Heart left ventricle (tissue), 16 donors: ENCODE measurements at regions of chr10 and their contacts with region 1.

Region 1: GRCh38 chr10:11611248-11612020 is at the start of gene USP6NL:
- DNase-seq: peak; percentile 93 to 95 (median 93)
- ATAC-seq: peak; percentile 88 to 98 (median 98)
- H3K4me3 ChIP-seq: peak within 1 kb of the TSS; percentile 74 to 96 (median 90)
- H3K27ac ChIP-seq: peak within 1 kb of the TSS; percentile 84 to 92 (median 89)
- H3K4me1 ChIP-seq: peaks cover 0 to 30% (median 10%) of the 10 kb centered on the region in 12 donors
- H3K27me3 ChIP-seq: no peaks in the 10 kb centered on the region
- CTCF ChIP-seq: no peak
- POLR2A ChIP-seq: peak; percentile 5 to 81
- total RNA-seq, gene USP6NL: 5.7 to 12.2 (median 9.7) TPM

Region 2: DNA sequence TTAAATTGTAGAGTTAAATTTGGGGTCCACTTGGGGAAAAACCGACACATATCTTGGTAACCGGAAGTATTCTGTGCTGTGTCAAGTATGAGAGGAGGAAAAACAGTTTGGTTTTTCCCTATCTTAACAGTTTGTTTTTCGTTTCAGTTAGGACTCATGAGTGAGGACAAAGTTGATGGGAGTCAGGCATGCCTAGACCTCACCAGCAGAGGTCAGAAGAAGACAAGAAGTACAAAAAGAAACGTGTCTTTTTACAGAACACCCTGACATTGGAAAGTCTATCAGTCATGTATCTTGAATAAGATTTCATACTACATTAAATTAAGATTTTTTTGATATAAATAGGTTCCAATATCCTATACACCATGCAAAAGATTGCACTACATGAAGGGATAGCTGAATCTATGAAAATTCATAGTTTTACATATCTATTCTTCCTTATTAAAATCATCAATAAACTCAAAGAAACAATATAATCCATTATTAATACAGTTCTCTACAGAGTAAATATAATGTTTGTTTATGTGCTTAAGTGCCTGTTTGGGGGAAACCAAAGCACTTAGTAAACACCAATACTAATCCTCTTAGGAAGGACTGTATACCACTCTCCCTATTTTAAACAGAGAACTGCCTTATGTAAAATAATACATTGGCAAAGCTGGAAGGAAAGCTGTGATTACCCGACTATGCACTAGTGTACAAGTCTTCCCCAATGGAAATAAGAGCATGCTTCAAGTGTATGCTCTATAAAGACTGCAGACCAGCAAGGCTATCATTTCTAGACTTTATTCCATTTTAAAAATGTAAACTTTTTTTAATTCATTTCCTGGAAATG is 95.6 kb before region 1 on chr10:
- intact Hi-C with region 1: loop called in 5 of 10 experiments (anchors 5 to 10 kb)
- DNase-seq: peak in 4 of 5 donors; percentile 29 to 41 (median 36)
- ATAC-seq: peak in 3 of 4 donors; percentile 76 to 90 (median 86)
- H3K4me3 ChIP-seq: no peak overlapping the region
- H3K27ac ChIP-seq: no peak overlapping the region
- H3K4me1 ChIP-seq: peaks cover 0 to 15% (median 3%) of the 10 kb centered on the region in 12 donors
- H3K27me3 ChIP-seq: no peaks in the 10 kb centered on the region
- CTCF ChIP-seq: peak; percentile 67 to 95 (median 86)
- POLR2A ChIP-seq: no peak

Region 3: GRCh38 chr10:11525503-11525902 is 85.9 kb before region 1 on chr10:
- intact Hi-C with region 1: loop called in 5 of 10 experiments (anchors 5 to 10 kb)
- DNase-seq: peak; percentile 62 to 78 (median 70)
- ATAC-seq: peak; percentile 46 to 79 (median 77)
- H3K4me3 ChIP-seq: peak overlapping the region in 1 of 12 donors; percentile 6
- H3K27ac ChIP-seq: peak overlapping the region in 6 of 12 donors; percentile 19 to 64 (median 48)
- H3K4me1 ChIP-seq: peaks cover 0 to 50% (median 27%) of the 10 kb centered on the region in 12 donors
- H3K27me3 ChIP-seq: no peaks in the 10 kb centered on the region
- CTCF ChIP-seq: no peak
- POLR2A ChIP-seq: no peak

Region 4: GRCh38 chr10:11684717-11685645 is 73.5 kb after region 1 on chr10:
- intact Hi-C with region 1: loop called in 1 of 10 experiments (anchors 10 kb)
- DNase-seq: peak; percentile 64 to 81 (median 68)
- ATAC-seq: peak; percentile 68 to 87 (median 79)
- H3K4me3 ChIP-seq: peak overlapping the region in 9 of 12 donors; percentile 23 to 56 (median 36)
- H3K27ac ChIP-seq: peak overlapping the region in 11 of 12 donors; percentile 10 to 87 (median 66)
- H3K4me1 ChIP-seq: peaks cover 0 to 46% (median 18%) of the 10 kb centered on the region in 12 donors
- H3K27me3 ChIP-seq: peaks cover 0 to 8% (median 0%) of the 10 kb centered on the region in 9 donors
- CTCF ChIP-seq: no peak
- POLR2A ChIP-seq: no peak

Region 5: GRCh38 chr10:11724938-11725776 is 113.7 kb after region 1 on chr10:
- intact Hi-C with region 1: loop called in 2 of 10 experiments (anchors 10 kb)
- DNase-seq: no peak
- ATAC-seq: peak in 3 of 4 donors; percentile 72 to 86 (median 85)
- H3K4me3 ChIP-seq: no peak overlapping the region
- H3K27ac ChIP-seq: no peak overlapping the region
- H3K4me1 ChIP-seq: peaks cover 0 to 5% (median 0%) of the 10 kb centered on the region in 12 donors
- H3K27me3 ChIP-seq: no peaks in the 10 kb centered on the region
- CTCF ChIP-seq: peak; percentile 59 to 79 (median 72)
- POLR2A ChIP-seq: no peak